Common myeloid progenitor, CD34-positive (primary cell): ENCODE measurements at regions of chrX and their contacts with region 1.

Region 1: GRCh38 chrX:65688403-65688871 is 21.0 kb downstream of the MSN start:
- DNase-seq: no peak
- H3K4me3 ChIP-seq: no peak overlapping the region
- H3K27ac ChIP-seq: no peak overlapping the region
- H3K4me1 ChIP-seq: peaks cover 19 to 72% (median 62%) of the 10 kb centered on the region in 4 experiments
- H3K27me3 ChIP-seq: peaks cover 0 to 2% (median 0%) of the 10 kb centered on the region in 5 experiments

Region 2: DNA sequence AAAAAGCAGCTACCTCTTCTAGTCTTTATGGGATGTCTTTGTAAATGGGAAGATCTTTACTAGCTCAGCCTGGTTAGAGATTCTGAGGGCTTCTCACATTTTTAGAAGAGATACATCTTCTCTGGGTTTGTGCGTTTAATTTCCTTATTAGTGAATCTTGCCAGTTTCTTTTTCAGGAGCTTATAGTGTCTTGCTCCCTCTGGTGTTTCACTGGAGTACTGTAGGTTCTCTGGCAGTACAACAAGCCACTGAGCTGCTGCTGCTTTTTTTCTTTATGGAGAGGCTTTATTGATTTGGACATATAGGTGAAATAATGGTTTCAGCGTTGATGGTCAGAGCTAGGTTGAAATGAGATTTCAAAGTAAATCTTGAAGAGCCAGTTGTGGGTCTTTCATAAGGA is 236.8 kb before region 1 on chrX:
- CTCF ChIA-PET with region 1: no interaction called
- POLR2A ChIA-PET with region 1: no interaction called
- DNase-seq: peak; percentile 14 to 57 (median 46)
- H3K4me3 ChIP-seq: no peak overlapping the region
- H3K27ac ChIP-seq: no peak overlapping the region
- H3K4me1 ChIP-seq: no peaks in the 10 kb centered on the region
- H3K27me3 ChIP-seq: no peaks in the 10 kb centered on the region

Region 3: DNA sequence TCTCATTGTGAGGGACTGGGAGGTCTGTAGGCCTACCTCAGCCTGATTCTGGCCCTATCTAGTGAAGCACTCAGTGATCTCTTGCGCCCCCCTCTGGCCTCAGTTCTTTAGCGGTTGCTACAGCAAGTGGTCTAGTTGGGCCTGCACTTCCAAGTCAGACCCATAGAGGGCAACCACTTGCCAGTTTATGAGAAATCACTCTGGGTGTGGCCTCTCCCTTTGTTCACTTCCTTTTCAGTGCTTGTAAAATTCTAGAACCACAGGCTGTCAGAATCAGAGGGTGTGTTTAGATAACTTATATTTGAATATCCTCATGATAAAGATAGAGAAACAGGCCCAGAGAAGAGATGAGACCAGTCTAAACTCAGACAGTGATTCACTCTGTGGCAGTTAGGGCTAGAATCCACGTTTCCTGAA is 93.0 kb before region 1 on chrX:
- CTCF ChIA-PET with region 1: interaction called, 10 read pairs
- POLR2A ChIA-PET with region 1: no interaction called
- DNase-seq: peak; percentile 93 to 99 (median 97)
- H3K4me3 ChIP-seq: peak overlapping the region in 2 of 7 experiments; percentile 16 to 31
- H3K27ac ChIP-seq: peak overlapping the region in 1 of 2 experiments; percentile 71
- H3K4me1 ChIP-seq: peaks cover 16 to 64% (median 23%) of the 10 kb centered on the region in 4 experiments
- H3K27me3 ChIP-seq: peaks cover 0 to 4% (median 0%) of the 10 kb centered on the region in 5 experiments

Region 4: DNA sequence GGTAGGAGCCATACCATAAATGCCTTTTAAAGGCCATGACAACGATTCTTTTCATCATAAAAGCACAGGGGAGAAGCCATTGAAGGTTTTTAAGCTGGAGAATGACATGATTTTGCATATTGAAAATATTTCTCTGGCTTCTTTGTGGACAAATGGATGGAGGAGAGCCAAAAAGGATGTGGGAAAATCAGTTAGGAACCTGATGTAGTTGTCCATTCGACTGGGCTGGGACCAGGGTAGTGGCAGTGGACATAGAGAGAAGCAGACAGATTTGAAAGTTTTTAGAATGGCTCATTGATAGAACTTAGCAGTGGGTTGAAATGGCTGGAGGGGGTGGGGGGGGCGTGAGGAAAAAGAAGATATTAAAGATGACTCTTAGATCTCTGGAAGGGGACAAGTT is 40.6 kb before region 1 on chrX:
- CTCF ChIA-PET with region 1: no interaction called
- POLR2A ChIA-PET with region 1: no interaction called
- DNase-seq: no peak
- H3K4me3 ChIP-seq: no peak overlapping the region
- H3K27ac ChIP-seq: no peak overlapping the region
- H3K4me1 ChIP-seq: peaks cover 0 to 14% (median 3%) of the 10 kb centered on the region in 4 experiments
- H3K27me3 ChIP-seq: peaks cover 0 to 3% (median 0%) of the 10 kb centered on the region in 5 experiments

Region 5: GRCh38 chrX:65674204-65674893 is 14.1 kb before region 1 on chrX:
- CTCF ChIA-PET with region 1: interaction called, 11 read pairs
- POLR2A ChIA-PET with region 1: no interaction called
- DNase-seq: peak in 2 of 3 donors; percentile 39 to 43
- H3K4me3 ChIP-seq: peak overlapping the region in 2 of 7 experiments; percentile 3 to 48
- H3K27ac ChIP-seq: peak overlapping the region in 1 of 2 experiments; percentile 59
- H3K4me1 ChIP-seq: peaks cover 29 to 82% (median 52%) of the 10 kb centered on the region in 4 experiments
- H3K27me3 ChIP-seq: peaks cover 0 to 10% (median 0%) of the 10 kb centered on the region in 5 experiments